CD8-positive, alpha-beta memory T cell (primary cell): ENCODE measurements at regions of chr14 and their contacts with region 1.

Region 1: DNA sequence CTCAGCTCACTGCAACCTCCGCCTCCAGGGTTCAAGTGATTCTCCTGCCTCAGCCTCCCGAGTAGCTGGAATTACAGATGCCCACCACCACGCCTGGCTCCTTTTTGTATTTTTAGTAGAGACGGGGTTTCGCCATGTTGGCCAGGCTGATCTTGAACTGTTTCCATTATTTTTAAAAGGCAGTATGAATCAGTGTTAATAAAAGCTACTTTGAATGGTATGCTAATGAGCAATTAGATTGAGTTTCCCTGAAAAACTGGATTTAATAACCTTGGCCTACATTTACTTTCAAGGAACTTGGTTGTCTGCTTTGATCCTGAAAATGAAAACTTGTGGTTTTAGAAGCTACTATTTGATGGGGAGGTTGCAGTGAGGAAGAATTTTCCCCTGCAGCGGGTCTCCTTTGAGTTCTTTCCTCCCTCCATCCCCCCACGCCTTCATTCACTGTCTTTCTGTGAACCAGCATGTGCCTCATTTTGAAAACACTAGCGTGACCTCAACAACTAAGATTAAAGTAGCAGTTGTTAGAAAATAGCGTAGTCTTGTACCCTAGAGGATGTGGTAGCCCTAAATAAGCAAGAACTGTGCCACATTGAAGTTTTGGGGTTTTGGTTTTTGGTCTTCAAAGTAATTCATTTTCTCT is 17.8 kb upstream of the RPS6KA5 start:
- DNase-seq: peak in 3 of 5 donors; percentile 56 to 86 (median 77)
- H3K4me3 ChIP-seq: no peak overlapping the region
- H3K4me3 Mint-ChIP-seq: peak overlapping the region; percentile 1 to 89 (median 77)
- H3K27ac ChIP-seq: no peak overlapping the region
- H3K27ac Mint-ChIP-seq: peak overlapping the region; percentile 7 to 97 (median 90)
- H3K4me1 ChIP-seq: peaks cover 16% of the 10 kb centered on the region
- H3K4me1 Mint-ChIP-seq: peaks cover 29 to 41% (median 38%) of the 10 kb centered on the region in 3 donors
- H3K27me3 ChIP-seq: no peaks in the 10 kb centered on the region
- H3K27me3 Mint-ChIP-seq: no peaks in the 10 kb centered on the region

Region 2: DNA sequence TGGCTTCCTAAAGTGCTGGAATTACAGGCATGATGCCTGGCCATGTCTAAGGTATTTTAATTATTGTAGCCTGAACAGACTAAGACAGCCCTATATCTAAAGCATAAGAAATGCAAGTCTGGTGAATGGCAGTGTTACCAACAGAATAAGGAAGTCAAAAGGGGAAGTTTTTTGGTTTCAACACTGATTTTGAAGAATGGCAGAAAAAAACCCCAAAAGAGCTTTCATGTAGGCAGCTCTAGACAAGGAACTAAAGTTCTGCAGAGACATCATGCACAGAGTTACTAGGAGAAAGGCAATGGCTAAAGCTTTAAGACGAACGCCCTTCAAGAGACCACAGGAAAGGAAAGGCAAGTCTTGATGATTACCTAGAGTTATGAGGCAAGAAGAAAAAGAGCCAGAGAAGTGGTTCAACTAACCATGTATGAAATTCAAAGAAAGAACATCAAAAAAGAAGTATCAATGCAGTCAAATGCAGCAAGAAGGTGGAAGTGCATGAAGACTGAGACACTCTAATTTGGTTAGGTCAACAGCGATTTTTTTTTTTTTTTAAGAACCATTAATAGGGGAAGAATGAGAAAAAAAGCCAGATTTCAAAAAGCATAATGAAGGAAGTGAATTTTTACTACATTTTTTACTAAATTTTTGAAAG is 68.6 kb before region 1 on chr14:
- CTCF ChIA-PET with region 1: no interaction called
- POLR2A ChIA-PET with region 1: no interaction called
- DNase-seq: peak in 1 of 5 donors; percentile 48
- H3K4me3 ChIP-seq: no peak overlapping the region
- H3K4me3 Mint-ChIP-seq: peak overlapping the region in 2 of 7 donors; percentile 9 to 24
- H3K27ac ChIP-seq: no peak overlapping the region
- H3K27ac Mint-ChIP-seq: peak overlapping the region in 5 of 8 donors; percentile 8 to 44 (median 27)
- H3K4me1 ChIP-seq: peaks cover 31% of the 10 kb centered on the region
- H3K4me1 Mint-ChIP-seq: peaks cover 34 to 56% (median 39%) of the 10 kb centered on the region in 3 donors
- H3K27me3 ChIP-seq: no peaks in the 10 kb centered on the region
- H3K27me3 Mint-ChIP-seq: no peaks in the 10 kb centered on the region

Region 3: GRCh38 chr14:91060351-91061055 is 17.7 kb before region 1 on chr14 and contains the start of gene RPS6KA5:
- CTCF ChIA-PET with region 1: interaction called, 11 read pairs
- POLR2A ChIA-PET with region 1: interaction called, 13 read pairs
- DNase-seq: peak; percentile 99 to 100 (median 100)
- H3K4me3 ChIP-seq: peak within 1 kb of the TSS; percentile 79
- H3K4me3 Mint-ChIP-seq: peak within 1 kb of the TSS; percentile 78 to 93 (median 85)
- H3K27ac ChIP-seq: peak within 1 kb of the TSS; percentile 94
- H3K27ac Mint-ChIP-seq: peak within 1 kb of the TSS in 6 of 8 donors; percentile 47 to 89 (median 60)
- H3K4me1 ChIP-seq: peaks cover 49% of the 10 kb centered on the region
- H3K4me1 Mint-ChIP-seq: peaks cover 57 to 66% (median 65%) of the 10 kb centered on the region in 3 donors
- H3K27me3 ChIP-seq: no peaks in the 10 kb centered on the region
- H3K27me3 Mint-ChIP-seq: no peaks in the 10 kb centered on the region
- total RNA-seq, gene RPS6KA5: 17.7 to 19.9 TPM